A549 (cell line): ENCODE measurements at regions of chr10 and their contacts with region 1.

Region 1: DNA sequence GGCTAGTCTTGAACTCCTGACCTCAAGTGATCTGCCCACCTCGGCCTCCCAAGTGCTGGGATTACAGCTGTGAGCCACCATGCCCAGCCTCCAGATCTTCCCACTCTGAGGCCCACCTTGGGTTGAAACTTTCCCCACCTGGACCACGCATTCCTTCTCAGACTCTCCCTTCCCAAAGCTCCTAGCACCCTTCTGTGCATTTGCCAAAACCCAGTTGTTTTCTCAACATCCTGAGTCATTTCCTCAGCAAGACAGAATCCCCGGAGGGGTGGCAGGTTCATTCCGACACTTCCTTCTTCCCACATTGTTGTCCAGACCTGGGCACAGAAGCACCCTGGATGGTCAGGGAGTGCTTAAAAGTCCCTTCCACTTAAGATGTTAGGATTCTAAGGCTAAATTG is 28.9 kb downstream of the BAG3 start:
- DNase-seq: peak; percentile 70 to 84
- ATAC-seq: peak; percentile 45 to 66
- H3K4me3 ChIP-seq: 0 out of 3 replicates have a peak overlapping the region, but pooled peaks have one; percentile 14
- H3K27ac ChIP-seq: peak overlapping the region; percentile 88 to 93
- H3K4me1 ChIP-seq: peaks cover 70% of the 10 kb centered on the region
- CTCF ChIP-seq: no peak
- EP300 ChIP-seq: no peak; a peak in 1 of 5 replicates
- POLR2A ChIP-seq: no peak
- RAD21 ChIP-seq: no peak

Region 2: DNA sequence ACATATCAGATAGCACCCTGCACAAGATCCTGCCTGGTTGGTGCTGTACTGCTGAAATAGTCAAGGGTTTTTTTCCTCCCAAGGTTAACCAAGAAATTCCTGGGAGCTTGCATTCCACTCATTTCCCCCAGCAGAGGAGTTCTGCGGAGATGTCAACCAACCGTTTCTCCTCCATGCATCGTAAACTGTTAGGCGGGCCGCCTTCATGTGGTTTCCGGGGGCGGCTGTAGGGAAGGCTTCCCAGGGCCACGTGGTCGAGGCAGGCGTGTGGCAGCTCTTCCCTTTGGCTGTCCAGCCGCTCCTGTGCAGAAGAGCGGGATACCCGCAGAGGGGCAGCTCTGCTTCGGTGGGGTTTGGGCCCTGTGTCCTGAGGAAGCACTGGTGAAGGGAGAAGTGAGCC is 251.3 kb before region 1 on chr10:
- CTCF ChIA-PET with region 1: no interaction called
- POLR2A ChIA-PET with region 1: no interaction called
- DNase-seq: no peak
- ATAC-seq: no peak
- H3K4me3 ChIP-seq: no peak overlapping the region
- H3K27ac ChIP-seq: no peak overlapping the region
- H3K4me1 ChIP-seq: no peaks in the 10 kb centered on the region
- CTCF ChIP-seq: no peak
- EP300 ChIP-seq: no peak
- POLR2A ChIP-seq: no peak
- RAD21 ChIP-seq: no peak

Region 3: GRCh38 chr10:119588071-119588470 is 92.0 kb before region 1 on chr10:
- CTCF ChIA-PET with region 1: no interaction called
- POLR2A ChIA-PET with region 1: no interaction called
- DNase-seq: no peak
- ATAC-seq: no peak
- H3K4me3 ChIP-seq: no peak overlapping the region
- H3K27ac ChIP-seq: no peak overlapping the region
- H3K4me1 ChIP-seq: peaks cover 16% of the 10 kb centered on the region
- CTCF ChIP-seq: no peak
- EP300 ChIP-seq: no peak
- POLR2A ChIP-seq: no peak
- RAD21 ChIP-seq: no peak

Region 4: GRCh38 chr10:119667562-119668328 is 12.3 kb before region 1 on chr10:
- CTCF ChIA-PET with region 1: interaction called, 13 read pairs
- POLR2A ChIA-PET with region 1: interaction called, 6 read pairs
- DNase-seq: peak; percentile 82 to 92
- ATAC-seq: peak; percentile 92 to 94
- H3K4me3 ChIP-seq: 0 out of 3 replicates have a peak overlapping the region, but pooled peaks have one; percentile 20
- H3K27ac ChIP-seq: peak overlapping the region; percentile 84 to 91
- H3K4me1 ChIP-seq: peaks cover 83% of the 10 kb centered on the region
- CTCF ChIP-seq: peak; percentile 20; the same call in 2 of the 3 replicates
- EP300 ChIP-seq: peak in 1 of 2 experiments; percentile 25; a peak in 1 of 5 replicates
- POLR2A ChIP-seq: no peak
- RAD21 ChIP-seq: peak; percentile 36 to 53; a peak in 4 of 5 replicates